Activated CD4-positive, alpha-beta memory T cell treated with anti-CD3 and anti-CD28 coated beads, Interleukin-2, amount 10 ng/mL, durations not matched to agents 7 days and 5 days (primary cell): ENCODE measurements at regions of chr20 and their contacts with region 1.

Region 1: DNA sequence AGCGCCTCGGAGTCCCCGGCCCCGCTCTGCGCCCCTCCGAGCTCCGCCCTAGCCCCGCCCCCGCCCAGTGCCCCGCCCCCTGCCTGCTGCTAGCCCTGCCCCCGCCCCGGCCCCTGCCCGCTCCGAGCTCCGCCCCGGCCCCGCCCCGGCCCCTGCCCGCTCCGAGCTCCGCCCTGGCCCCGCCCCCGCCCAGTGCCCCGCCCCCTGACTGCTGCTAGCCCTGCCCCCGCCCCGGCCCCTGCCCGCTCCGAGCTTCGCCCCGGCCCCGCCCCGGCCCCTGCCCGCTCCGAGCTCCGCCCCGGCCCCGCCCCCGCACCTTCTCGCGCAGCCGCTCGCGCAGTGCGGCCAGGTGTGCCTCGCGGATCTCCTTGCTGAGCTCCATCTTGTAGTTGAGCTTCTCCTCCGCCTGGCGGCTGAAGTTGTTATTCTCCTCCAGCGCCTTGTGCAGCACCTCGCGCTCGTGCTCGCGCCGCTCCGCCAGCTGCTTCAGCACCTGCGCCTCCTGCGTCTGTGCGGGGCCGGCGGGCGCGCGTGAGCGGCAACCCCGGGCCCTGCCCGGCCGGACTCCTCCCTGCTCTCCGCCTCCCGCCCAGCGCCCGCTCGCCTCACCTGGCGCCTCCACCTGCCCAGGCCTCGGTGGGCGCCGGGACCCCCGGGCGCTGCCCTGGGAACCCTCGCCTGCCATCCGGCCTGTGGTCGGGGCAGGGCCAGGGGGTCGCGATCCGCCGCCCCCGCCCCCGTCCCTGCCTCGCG is 11.3 kb downstream of the STMN3 start:
- DNase-seq: peak; percentile 97
- H3K4me3 Mint-ChIP-seq: peak overlapping the region; percentile 69
- H3K27ac Mint-ChIP-seq: peak overlapping the region; percentile 71
- H3K4me1 Mint-ChIP-seq: peaks cover 31% of the 10 kb centered on the region
- H3K27me3 Mint-ChIP-seq: peaks cover 3% of the 10 kb centered on the region

Region 2: DNA sequence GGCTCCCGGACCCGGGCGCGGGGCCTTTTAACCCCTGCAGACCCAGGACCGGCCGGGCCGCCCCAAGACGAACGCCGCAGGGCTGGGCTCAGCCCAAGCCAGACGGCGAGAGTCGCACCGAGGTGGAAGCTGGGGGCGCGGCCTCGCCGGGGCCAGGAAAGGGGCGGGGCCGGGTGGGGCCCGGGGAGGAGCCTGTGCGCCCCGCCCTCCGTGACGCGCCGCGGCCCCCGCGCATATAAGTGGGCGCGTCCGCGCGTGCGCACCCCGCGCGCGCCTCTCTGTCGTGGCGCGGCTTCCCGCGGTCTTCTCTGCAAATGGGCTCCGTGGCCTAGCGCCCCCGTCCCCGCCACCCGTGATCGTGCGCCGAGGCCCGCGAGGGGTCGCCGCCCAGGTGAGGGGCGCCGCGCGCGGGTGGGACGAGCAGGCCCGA is 121.4 kb before region 1 on chr20 and contains the start of gene PPDPF:
- CTCF ChIA-PET with region 1: interaction called, 7 read pairs
- POLR2A ChIA-PET with region 1: interaction called, 21 read pairs
- DNase-seq: peak; percentile 89
- H3K4me3 Mint-ChIP-seq: peak within 1 kb of the TSS; percentile 79
- H3K27ac Mint-ChIP-seq: peak within 1 kb of the TSS; percentile 81
- H3K4me1 Mint-ChIP-seq: peaks cover 10% of the 10 kb centered on the region
- H3K27me3 Mint-ChIP-seq: peaks cover 9% of the 10 kb centered on the region
- total RNA-seq, gene PPDPF: 228 to 232 TPM

Region 3: GRCh38 chr20:63574156-63574828 is 67.7 kb before region 1 on chr20 and contains the start of gene HELZ2:
- CTCF ChIA-PET with region 1: interaction called, 10 read pairs
- POLR2A ChIA-PET with region 1: interaction called, 14 read pairs
- DNase-seq: peak; percentile 86
- H3K4me3 Mint-ChIP-seq: peak within 1 kb of the TSS; percentile 83
- H3K27ac Mint-ChIP-seq: peak within 1 kb of the TSS; percentile 81
- H3K4me1 Mint-ChIP-seq: peaks cover 13% of the 10 kb centered on the region
- H3K27me3 Mint-ChIP-seq: peaks cover 25% of the 10 kb centered on the region
- total RNA-seq, gene HELZ2: 202 to 208 TPM

Region 4: DNA sequence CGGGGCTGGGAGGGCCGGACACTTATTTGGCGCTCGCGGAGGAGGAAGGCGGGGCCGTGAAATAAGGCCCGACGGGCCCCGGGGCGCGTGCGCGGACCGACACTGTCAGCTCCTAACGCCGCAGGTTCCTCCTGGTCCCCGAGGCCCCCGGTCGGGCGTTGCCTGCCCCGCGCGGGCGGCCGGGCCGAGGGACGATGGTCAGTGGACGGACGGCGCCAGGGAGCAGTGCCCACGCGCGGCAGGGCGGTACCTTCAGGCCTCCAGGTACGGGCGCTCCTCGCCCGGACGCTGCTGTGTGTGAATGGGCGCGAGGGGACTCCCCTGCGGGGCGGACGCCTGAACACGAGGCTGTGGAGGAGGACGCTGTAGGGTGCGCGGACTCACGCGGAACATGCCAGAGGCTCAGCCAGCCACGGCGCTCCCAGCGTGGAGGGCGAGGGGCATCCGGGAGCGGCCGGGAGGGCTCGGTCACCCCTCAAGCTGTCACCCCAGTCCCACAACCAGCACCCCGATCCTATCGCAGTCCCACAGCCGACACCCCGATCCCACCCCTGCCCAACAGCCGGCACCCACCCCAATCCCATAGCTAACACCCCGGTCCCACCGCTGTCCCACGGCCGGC is 14.7 kb before region 1 on chr20:
- CTCF ChIA-PET with region 1: interaction called, 20 read pairs
- POLR2A ChIA-PET with region 1: interaction called, 282 read pairs
- DNase-seq: peak; percentile 95
- H3K4me3 Mint-ChIP-seq: peak overlapping the region; percentile 98
- H3K27ac Mint-ChIP-seq: peak overlapping the region; percentile 73
- H3K4me1 Mint-ChIP-seq: peaks cover 33% of the 10 kb centered on the region
- H3K27me3 Mint-ChIP-seq: no peaks in the 10 kb centered on the region

Region 5: GRCh38 chr20:63864847-63865640 is 223.1 kb after region 1 on chr20 and contains the start of gene TPD52L2:
- CTCF ChIA-PET with region 1: interaction called, 7 read pairs
- POLR2A ChIA-PET with region 1: interaction called, 14 read pairs
- DNase-seq: peak; percentile 99
- H3K4me3 Mint-ChIP-seq: peak within 1 kb of the TSS; percentile 83
- H3K27ac Mint-ChIP-seq: peak within 1 kb of the TSS; percentile 88
- H3K4me1 Mint-ChIP-seq: peaks cover 40% of the 10 kb centered on the region
- H3K27me3 Mint-ChIP-seq: no peaks in the 10 kb centered on the region
- total RNA-seq, gene TPD52L2: 48.2 to 48.7 TPM